Heart right ventricle (tissue), 16 donors: ENCODE measurements at regions of chr7 and their contacts with region 1.

Region 1: DNA sequence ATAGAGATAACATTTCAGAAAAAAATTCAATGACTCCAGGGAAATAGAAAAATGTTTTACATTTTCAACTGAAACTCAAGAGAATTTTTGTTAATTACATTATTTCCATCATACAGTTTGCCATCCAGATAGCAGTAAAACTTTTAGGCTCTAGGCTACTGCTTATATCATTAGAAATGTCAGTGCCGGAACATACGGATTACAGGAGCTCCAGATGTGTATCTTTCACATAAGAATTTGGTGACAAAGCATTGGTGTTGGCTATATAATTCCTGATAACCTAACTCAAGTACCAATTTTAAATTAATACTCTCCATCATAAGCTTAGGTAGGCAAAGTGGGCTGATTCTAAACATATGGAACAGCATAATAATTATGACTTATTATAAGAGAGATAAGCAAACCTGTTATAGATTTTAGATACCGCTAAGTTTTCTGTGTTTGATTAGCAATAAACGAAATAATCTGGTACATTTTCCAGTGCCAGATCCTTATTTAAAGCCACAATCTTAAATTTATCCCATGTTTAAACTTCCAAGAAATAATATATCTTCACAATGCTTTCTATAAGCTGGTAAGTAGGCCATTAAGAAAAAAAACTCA is 637.9 kb downstream of the NXPH1 start:
- DNase-seq: no peak
- ATAC-seq: no peak
- H3K4me3 ChIP-seq: no peak overlapping the region
- H3K27ac ChIP-seq: no peak overlapping the region
- H3K4me1 ChIP-seq: no peaks in the 10 kb centered on the region
- H3K27me3 ChIP-seq: no peaks in the 10 kb centered on the region
- CTCF ChIP-seq: no peak

Region 2: DNA sequence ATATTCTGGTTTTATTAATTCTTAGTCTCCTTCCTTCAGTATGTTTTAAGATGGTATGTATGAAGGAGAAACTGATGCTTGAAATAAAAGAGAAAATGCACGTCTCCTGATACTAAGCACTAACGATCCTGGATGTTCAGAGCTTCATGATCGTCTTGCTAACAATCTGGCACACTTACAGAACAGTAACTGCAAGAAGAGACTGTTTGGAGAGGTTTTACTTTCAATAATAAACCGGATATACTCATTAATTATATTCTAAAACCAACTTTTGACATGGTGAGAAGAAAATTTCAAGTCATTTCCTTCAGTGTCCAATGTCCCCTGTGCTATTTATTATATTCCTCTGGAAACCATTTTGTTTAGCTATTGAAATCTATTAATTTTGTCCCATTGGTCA is 386.8 kb before region 1 on chr7:
- intact Hi-C with region 1: loop called in 1 of 10 experiments (anchors 10 kb)
- DNase-seq: no peak
- ATAC-seq: no peak
- H3K4me3 ChIP-seq: no peak overlapping the region
- H3K27ac ChIP-seq: no peak overlapping the region
- H3K4me1 ChIP-seq: no peaks in the 10 kb centered on the region
- H3K27me3 ChIP-seq: no peaks in the 10 kb centered on the region
- CTCF ChIP-seq: no peak